Activated naive CD4-positive, alpha-beta T cell treated with anti-CD3 and anti-CD28 coated beads for 36 hours (primary cell): ENCODE measurements at regions of chr19 and their contacts with region 1.

Region 1: DNA sequence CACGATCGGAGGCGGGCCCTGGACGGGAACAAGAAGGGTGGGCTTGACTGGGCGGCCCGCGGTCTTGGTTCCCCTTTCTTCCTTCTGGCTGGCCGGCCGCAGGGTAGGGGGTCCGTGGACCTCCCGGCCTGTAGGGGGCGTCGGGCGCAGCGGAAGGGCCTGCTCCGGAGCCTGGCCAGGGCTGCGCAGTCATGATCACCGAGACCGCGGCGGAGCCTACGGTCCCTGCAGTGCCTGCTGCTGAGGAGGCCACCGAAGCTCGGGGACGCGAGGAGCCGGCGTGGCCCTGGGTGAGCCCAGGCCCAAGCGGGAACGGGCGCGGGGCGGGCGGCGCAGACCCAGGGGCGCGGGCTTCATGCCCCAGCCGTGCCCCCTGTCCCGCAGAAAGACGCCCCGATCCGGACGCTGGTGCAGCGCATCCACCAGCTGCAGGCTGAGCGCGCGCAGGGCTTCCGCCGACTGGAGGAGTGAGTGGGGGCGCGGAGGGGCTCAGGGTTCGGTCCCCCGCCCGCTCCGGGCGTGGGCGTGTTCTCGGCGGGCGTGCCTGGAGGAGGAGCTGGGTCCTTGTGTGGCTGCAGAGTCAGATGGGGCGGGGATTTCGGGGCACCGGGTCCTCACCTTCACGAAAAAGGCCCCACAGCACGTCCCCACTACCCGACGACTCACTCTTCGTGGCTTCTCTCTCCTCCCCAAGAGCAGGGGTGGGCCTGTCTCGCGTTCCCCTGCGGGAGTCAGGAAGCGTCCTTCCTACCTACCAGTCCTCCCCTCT is at the start of gene REX1BD:
- DNase-seq: peak; percentile 83
- H3K4me3 Mint-ChIP-seq: peak within 1 kb of the TSS; percentile 87
- H3K27ac Mint-ChIP-seq: peak within 1 kb of the TSS; percentile 87
- H3K4me1 Mint-ChIP-seq: peaks cover 27% of the 10 kb centered on the region
- H3K27me3 Mint-ChIP-seq: no peaks in the 10 kb centered on the region
- total RNA-seq, gene REX1BD: 62.9 to 68.5 TPM

Region 2: DNA sequence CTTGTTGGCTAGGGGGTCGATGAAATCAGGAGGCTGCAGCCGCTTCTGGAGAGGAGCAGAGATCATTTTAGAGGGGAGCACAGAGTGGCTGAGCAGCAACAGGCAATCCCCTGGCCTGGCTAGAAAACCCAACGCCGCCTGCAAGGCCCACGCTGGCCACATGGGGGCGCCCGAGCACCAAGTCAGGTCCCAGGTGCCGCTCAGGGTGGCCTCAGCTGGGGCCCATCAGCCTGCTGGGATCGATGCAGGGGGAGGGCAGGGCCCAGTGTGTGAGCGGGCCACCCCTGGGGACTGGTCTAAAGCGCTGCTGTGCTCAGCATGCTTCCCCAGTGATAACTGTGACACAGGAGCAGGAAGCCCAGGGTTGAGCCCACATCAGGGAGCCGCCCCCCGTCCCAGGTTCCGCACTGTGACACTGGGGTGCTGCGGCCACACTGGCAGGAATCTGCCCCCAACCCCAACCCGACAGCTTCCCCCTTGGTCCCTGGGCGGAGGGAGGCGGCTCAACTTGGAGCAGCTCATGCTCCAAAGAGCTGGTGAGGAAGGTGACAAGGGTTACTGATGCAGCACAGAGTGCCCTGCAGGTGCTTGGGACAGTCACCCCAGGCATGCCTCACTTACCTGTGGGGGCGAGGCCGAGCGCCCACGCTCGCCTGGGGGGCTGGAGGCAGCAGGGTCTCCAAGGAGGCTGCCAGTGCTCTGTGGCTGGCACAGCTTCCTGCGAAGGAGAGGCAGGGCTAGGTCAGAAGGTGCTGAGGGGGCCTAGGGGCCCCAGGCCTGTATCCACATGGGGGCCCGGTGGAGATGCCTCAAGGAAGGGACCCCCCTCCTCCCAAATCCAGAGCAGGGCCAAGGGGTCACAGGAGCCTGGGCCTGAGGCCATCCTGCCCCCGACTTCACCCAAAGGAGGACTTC is 137.6 kb before region 1 on chr19:
- CTCF ChIA-PET with region 1: interaction called, 5 read pairs
- intact Hi-C with region 1: loop called (anchors 5 kb)
- DNase-seq: peak; percentile 93
- H3K4me3 Mint-ChIP-seq: no peak overlapping the region
- H3K27ac Mint-ChIP-seq: no peak overlapping the region
- H3K4me1 Mint-ChIP-seq: no peaks in the 10 kb centered on the region
- H3K27me3 Mint-ChIP-seq: no peaks in the 10 kb centered on the region

Region 3: GRCh38 chr19:18542936-18543815 is 45.6 kb before region 1 on chr19 and contains the start of gene FKBP8:
- CTCF ChIA-PET with region 1: interaction called, 3 read pairs
- intact Hi-C with region 1: loop called (anchors 1 kb)
- DNase-seq: peak; percentile 97
- H3K4me3 Mint-ChIP-seq: peak within 1 kb of the TSS; percentile 88
- H3K27ac Mint-ChIP-seq: peak within 1 kb of the TSS; percentile 95
- H3K4me1 Mint-ChIP-seq: peaks cover 21% of the 10 kb centered on the region
- H3K27me3 Mint-ChIP-seq: no peaks in the 10 kb centered on the region
- total RNA-seq, gene FKBP8: 161 to 163 TPM

Region 4: GRCh38 chr19:18571564-18572300 is 17.1 kb before region 1 on chr19 and contains the start of gene UBA52:
- CTCF ChIA-PET with region 1: interaction called, 39 read pairs
- intact Hi-C with region 1: loop called (anchors 1 kb)
- DNase-seq: peak; percentile 99
- H3K4me3 Mint-ChIP-seq: peak within 1 kb of the TSS; percentile 90
- H3K27ac Mint-ChIP-seq: peak within 1 kb of the TSS; percentile 93
- H3K4me1 Mint-ChIP-seq: peaks cover 30% of the 10 kb centered on the region
- H3K27me3 Mint-ChIP-seq: no peaks in the 10 kb centered on the region
- total RNA-seq, gene UBA52: 1,997 to 2,122 TPM

Region 5: DNA sequence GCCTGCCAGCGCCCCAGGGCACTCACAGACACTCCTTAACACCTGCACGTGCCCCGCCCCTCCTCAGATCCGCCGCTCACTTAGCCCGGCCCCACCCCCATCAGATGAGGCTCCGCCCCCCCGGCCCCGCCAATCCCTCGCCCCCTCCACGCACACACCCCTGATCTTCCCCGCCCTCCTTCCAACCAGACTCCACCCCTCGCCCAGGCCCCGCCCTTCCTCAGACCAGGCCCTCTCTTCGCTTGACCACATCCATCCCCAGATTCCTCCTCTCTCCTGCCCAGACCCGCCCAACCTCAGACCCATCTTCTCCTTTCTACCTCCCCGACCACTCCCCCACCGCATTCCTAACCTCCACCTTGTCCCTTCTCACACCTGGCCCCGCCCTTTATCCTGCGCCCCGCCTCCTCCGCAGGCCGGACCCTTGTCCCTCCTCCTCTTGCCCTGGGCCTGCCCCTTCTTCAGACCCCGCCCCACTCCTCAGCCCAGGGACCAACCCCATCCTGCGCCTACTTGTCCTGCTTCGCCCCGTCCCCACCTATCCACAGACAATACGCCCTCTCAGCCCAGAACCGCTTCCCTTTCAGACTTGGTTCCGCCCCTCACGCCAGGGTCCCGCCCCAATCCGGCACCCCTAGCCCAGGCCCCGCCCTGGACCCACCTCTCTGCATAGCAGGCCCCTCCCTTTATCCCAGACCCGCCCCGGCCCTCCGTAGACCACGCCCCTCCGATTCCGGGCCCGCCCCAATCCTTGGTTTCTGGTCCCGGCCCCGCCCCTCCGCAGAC is 47.6 kb after region 1 on chr19:
- CTCF ChIA-PET with region 1: interaction called, 3 read pairs
- intact Hi-C with region 1: loop called (anchors 2 kb)
- DNase-seq: peak; percentile 100
- H3K4me3 Mint-ChIP-seq: peak overlapping the region; percentile 81
- H3K27ac Mint-ChIP-seq: peak overlapping the region; percentile 57
- H3K4me1 Mint-ChIP-seq: peaks cover 23% of the 10 kb centered on the region
- H3K27me3 Mint-ChIP-seq: no peaks in the 10 kb centered on the region

Region 6: DNA sequence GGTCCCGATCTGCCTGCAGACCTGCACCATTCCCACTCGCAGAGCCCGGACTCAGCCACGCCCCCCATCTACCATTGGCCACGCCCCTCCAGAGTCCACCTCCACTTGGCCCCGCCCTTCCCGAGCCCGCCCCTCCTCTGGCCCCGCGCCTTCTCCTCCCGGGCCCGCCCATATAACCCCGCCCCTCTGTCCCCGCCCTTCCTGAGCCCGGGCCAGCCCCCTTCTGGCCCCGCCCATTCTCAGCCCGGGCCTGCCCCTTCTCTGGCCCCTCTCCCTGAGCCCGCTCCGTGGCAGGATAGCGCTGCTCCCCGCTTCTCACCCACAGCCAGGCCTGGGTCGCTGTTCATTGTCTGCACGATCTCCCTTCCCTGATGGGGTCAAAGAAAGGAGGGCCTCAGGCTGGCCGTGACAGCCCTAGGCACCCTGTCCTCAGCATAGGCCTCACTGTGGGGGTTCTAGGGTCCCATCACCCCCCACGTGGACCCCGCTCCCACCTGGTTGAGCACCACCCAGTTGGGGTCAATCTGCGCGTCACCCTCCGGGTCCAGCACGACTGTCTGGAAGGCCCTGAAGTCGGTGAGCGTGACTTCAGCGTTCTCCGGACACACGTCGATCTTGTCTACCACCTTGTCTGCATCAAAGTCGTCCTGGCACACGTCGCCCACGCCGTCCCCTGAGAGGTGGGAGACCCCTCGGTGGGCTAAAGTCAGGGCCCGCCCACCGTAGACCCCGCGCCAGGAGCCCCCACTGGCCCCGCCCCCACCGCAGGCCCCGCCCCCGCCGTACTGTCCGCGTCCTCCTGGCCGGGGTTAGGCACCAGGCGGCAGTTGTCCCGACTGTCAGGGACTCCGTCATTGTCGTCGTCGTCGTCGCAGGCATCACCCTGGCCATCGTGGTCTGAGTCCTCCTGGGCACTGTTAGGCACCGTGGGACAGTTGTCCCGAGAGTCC is 196.7 kb after region 1 on chr19:
- CTCF ChIA-PET with region 1: no interaction called
- intact Hi-C with region 1: loop called (anchors 5 kb)
- DNase-seq: peak; percentile 79
- H3K4me3 Mint-ChIP-seq: no peak overlapping the region
- H3K27ac Mint-ChIP-seq: no peak overlapping the region
- H3K4me1 Mint-ChIP-seq: peaks cover 35% of the 10 kb centered on the region
- H3K27me3 Mint-ChIP-seq: peaks cover 51% of the 10 kb centered on the region